Adrenal gland (tissue), 19 donors: ENCODE measurements at regions of chr5 and their contacts with region 1.

Region 1: DNA sequence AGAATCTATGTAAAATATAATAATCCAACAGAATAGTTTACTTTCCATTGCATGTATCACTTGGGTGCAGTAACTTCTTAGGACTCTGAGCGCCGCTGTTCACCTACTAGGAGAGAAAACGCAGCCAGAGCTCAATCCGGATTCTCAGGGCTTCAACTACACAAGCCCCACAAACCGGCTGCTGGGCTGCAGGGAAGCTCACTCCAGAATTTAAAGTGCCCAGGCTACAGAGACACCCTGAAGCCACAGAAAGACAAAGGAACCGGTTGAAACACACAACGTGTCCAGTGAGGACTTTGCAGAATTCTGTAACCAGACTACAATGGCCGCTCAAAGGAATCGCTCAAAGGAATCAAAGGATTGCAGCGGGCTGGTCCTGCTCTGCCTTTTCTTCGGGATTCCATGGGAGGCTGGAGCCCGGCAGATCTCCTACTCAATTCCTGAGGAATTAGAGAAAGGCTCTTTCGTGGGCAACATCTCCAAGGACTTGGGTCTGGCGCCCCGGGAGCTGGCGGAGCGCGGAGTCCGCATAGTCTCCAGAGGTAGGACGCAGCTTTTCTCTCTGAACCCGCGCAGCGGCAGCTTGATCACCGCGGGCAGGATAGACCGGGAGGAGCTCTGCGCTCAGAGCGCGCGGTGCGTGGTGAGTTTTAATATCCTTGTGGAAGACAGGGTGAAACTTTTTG is at the start of gene PCDHGA10:
- DNase-seq: peak in 6 of 7 donors; percentile 34 to 68 (median 46)
- H3K4me3 ChIP-seq: peak within 1 kb of the TSS in 2 of 4 donors; percentile 6 to 43
- H3K27ac ChIP-seq: peak within 1 kb of the TSS in 1 of 5 donors; percentile 40
- H3K4me1 ChIP-seq: no peaks in the 10 kb centered on the region
- H3K27me3 ChIP-seq: no peaks in the 10 kb centered on the region
- CTCF ChIP-seq: peak; percentile 19 to 44 (median 38)
- POLR2A ChIP-seq: no peak
- total RNA-seq, gene PCDHGA10: 4.5 to 9.7 (median 7.7) TPM

Region 2: DNA sequence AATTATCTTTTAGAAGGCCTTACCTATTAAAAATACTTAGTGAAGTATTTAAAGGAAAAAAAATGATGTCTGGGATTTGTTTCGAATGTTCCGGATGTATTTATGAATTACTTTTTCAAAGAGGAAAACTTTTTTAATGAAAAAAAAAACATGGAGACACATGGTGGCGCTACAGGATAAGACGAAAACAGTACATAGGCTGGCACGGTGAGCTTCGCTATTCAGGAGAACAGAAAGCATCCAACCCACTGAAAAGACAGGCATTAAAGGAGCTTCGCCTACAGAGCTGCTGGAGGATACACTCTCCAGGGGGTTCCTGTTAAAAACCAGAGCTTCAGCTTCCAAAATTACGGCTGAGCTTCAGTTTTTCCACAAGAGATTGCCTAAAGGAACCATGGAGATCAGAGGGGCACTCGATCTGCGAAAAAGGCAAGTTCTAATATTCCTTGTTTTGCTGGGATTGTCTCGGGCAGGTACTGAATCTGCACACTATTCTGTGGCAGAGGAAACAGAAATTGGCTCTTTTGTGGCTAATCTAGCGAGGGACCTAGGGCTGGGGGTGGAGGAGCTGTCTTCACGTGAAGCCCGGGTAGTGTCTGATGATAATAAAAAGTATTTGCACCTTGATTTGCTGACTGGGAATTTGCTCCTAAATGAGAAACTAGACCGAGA is 189.7 kb before region 1 on chr5 and contains the start of gene PCDHB14:
- intact Hi-C with region 1: loop called in 1 of 2 experiments (anchors 10 kb)
- DNase-seq: peak in 1 of 7 donors; percentile 6
- H3K4me3 ChIP-seq: no peak within 1 kb of the TSS
- H3K27ac ChIP-seq: no peak within 1 kb of the TSS
- H3K4me1 ChIP-seq: no peaks in the 10 kb centered on the region
- H3K27me3 ChIP-seq: no peaks in the 10 kb centered on the region
- CTCF ChIP-seq: peak in 2 of 6 experiments; percentile 12 to 13
- POLR2A ChIP-seq: no peak
- total RNA-seq, gene PCDHB14: 1.7 to 7.7 (median 3.7) TPM

Region 3: GRCh38 chr5:141313711-141314110 is 99.3 kb before region 1 on chr5:
- intact Hi-C with region 1: loop called in 1 of 2 experiments (anchors 10 kb)
- DNase-seq: no peak
- H3K4me3 ChIP-seq: no peak overlapping the region
- H3K27ac ChIP-seq: no peak overlapping the region
- H3K4me1 ChIP-seq: no peaks in the 10 kb centered on the region
- H3K27me3 ChIP-seq: no peaks in the 10 kb centered on the region
- CTCF ChIP-seq: no peak
- POLR2A ChIP-seq: no peak

Region 4: GRCh38 chr5:141359790-141360426 is 53.1 kb before region 1 on chr5 and contains the start of gene PCDHGB2:
- intact Hi-C with region 1: no loop called
- DNase-seq: no peak
- H3K4me3 ChIP-seq: no peak within 1 kb of the TSS
- H3K27ac ChIP-seq: no peak within 1 kb of the TSS
- H3K4me1 ChIP-seq: no peaks in the 10 kb centered on the region
- H3K27me3 ChIP-seq: no peaks in the 10 kb centered on the region
- CTCF ChIP-seq: peak in 3 of 6 experiments; percentile 6 to 23 (median 16)
- POLR2A ChIP-seq: no peak
- total RNA-seq, gene PCDHGB2: 1.6 to 6.3 (median 3.4) TPM

Region 5: DNA sequence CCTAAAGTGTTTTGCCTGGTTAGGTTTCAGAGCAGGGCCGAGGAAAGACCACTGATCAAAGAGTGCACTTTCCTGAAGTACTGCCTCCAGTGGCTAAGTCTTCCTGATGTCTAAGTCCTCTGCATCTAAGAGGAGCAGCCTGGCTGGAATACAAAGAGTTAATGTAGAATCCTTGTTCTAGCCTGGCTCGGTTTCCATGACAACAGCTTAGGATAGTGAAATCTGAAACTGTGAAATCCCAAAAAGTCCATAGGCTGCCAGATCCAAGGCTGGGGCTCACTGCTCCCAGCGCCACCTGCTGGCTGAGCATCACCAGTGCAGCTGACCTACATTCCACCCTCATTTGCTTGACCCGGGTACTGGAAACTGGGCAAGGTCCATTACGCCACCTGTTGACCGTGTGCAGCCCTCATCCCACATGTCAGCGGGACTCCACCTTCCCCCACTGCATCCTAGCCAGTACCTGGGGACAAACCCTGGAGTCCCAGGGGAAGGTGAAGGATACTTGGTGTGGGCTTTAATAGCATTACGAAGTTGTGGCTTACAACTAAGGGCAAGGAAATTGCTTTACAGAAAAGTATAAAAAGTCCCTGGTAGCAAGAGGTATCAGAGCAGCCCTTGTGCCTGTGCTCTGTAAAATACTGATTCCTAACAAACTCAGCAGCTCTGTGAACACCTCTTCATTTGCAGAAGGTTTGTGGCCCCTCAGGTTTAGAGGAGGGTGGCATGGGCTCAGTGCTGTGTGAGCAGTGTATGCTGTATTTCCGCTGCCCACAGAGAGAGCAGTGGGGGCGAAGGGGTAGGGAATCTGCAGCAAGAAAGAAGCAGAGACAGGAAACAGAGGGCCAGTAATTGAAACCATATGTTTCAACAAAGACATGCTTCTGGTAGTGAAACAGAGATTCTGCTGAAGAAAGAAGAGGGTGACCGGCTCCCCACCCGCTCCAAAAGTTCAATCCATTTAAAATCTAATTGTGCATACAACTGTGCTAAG is 111.9 kb after region 1 on chr5:
- intact Hi-C with region 1: loop called in 1 of 2 experiments (anchors 10 kb)
- DNase-seq: peak; percentile 91 to 98 (median 94)
- H3K4me3 ChIP-seq: no peak overlapping the region
- H3K27ac ChIP-seq: peak overlapping the region; percentile 6 to 81 (median 36)
- H3K4me1 ChIP-seq: peaks cover 46 to 61% of the 10 kb centered on the region in 2 donors
- H3K27me3 ChIP-seq: no peaks in the 10 kb centered on the region
- CTCF ChIP-seq: peak; percentile 99 to 100 (median 100)
- POLR2A ChIP-seq: no peak

Region 6: DNA sequence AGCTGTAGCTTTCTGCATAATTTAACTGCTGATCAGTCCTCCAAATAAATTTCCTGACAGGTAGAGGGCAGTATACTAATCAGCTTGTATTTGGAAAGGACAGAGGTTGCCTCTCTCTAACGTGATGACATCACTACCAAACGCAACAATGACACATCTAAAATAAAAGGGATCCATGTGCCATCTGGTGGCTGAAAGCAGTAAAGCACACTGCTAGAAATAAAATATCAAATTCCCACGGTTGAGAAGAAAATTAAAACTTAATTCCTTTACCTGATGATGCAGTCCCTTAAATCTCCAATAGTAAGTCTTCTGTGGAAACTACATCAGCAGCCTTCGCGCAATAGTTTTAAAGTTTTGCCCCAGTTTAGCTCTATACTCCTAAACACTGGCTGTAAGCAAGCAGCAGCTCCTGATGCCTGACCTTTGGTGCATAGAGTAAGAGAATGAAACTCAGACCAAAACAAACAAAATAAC is 151.3 kb after region 1 on chr5:
- intact Hi-C with region 1: loop called (anchors 5 to 10 kb)
- DNase-seq: peak; percentile 59 to 90 (median 81)
- H3K4me3 ChIP-seq: no peak overlapping the region
- H3K27ac ChIP-seq: peak overlapping the region in 4 of 5 donors; percentile 21 to 65 (median 42)
- H3K4me1 ChIP-seq: peaks cover 0 to 32% of the 10 kb centered on the region in 2 donors
- H3K27me3 ChIP-seq: no peaks in the 10 kb centered on the region
- CTCF ChIP-seq: peak; percentile 96 to 100 (median 98)
- POLR2A ChIP-seq: no peak